Naive thymus-derived CD8-positive, alpha-beta T cell (primary cell): ENCODE measurements at regions of chr11 and their contacts with region 1.

Region 1: GRCh38 chr11:18634140-18635032 is at the start of gene SPTY2D1:
- DNase-seq: peak; percentile 92 to 99 (median 98)
- ATAC-seq: peak; percentile 89
- H3K4me3 Mint-ChIP-seq: peak within 1 kb of the TSS; percentile 87 to 96 (median 94)
- H3K27ac Mint-ChIP-seq: peak within 1 kb of the TSS; percentile 95 to 100 (median 99)
- H3K4me1 Mint-ChIP-seq: peaks cover 10 to 42% (median 38%) of the 10 kb centered on the region in 4 donors
- H3K27me3 Mint-ChIP-seq: peaks cover 0 to 1% (median 0%) of the 10 kb centered on the region in 5 donors
- polyA plus RNA-seq, gene SPTY2D1: 4.7 to 11.0 (median 7.3) TPM

Region 2: GRCh38 chr11:18321980-18322711 is 312.2 kb before region 1 on chr11 and contains the starts of genes GTF2H1 and HPS5:
- POLR2A ChIA-PET with region 1: interaction called, 13 read pairs
- DNase-seq: peak; percentile 84 to 100 (median 97)
- ATAC-seq: peak; percentile 87 to 90
- H3K4me3 Mint-ChIP-seq: peak within 1 kb of the TSS; percentile 93 to 100 (median 99)
- H3K27ac Mint-ChIP-seq: peak within 1 kb of the TSS; percentile 98 to 100 (median 100)
- H3K4me1 Mint-ChIP-seq: peaks cover 37 to 85% (median 79%) of the 10 kb centered on the region in 4 donors
- H3K27me3 Mint-ChIP-seq: no peaks in the 10 kb centered on the region
- polyA plus RNA-seq, gene GTF2H1: 29.0 to 34.3 (median 29.0) TPM
- polyA plus RNA-seq, gene HPS5: 11.6 to 12.2 (median 11.7) TPM

Region 3: GRCh38 chr11:18588297-18589252 is 45.8 kb before region 1 on chr11 and contains the start of gene UEVLD:
- POLR2A ChIA-PET with region 1: interaction called, 14 read pairs
- DNase-seq: peak in 9 of 10 donors; percentile 21 to 66 (median 38)
- ATAC-seq: peak; percentile 46 to 61
- H3K4me3 Mint-ChIP-seq: no peak within 1 kb of the TSS
- H3K27ac Mint-ChIP-seq: no peak within 1 kb of the TSS
- H3K4me1 Mint-ChIP-seq: peaks cover 0 to 12% (median 5%) of the 10 kb centered on the region in 4 donors
- H3K27me3 Mint-ChIP-seq: no peaks in the 10 kb centered on the region
- polyA plus RNA-seq, gene UEVLD: 5.5 to 8.9 (median 6.1) TPM

Region 4: DNA sequence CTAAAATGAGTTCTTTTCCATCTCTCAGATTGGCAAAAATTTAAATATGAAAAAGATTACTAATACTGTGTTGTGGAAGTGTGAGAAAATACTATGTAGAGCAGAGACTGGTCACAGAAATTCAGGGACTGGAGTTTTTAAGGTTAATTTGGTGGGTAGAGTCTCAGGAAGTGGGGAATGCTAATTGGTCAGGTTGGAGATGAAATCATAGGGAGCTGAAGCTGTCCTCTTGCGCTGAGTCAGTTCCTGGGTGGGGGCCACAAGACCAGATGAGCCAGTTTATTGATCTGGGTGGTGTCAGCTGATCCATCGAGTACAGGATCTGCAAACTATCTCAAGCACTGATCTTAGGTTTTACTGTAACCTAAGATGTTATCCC is 34.8 kb after region 1 on chr11:
- POLR2A ChIA-PET with region 1: interaction called, 12 read pairs
- DNase-seq: no peak
- ATAC-seq: no peak
- H3K4me3 Mint-ChIP-seq: peak overlapping the region in 7 of 10 donors; percentile 7 to 48 (median 23)
- H3K27ac Mint-ChIP-seq: peak overlapping the region; percentile 2 to 82 (median 64)
- H3K4me1 Mint-ChIP-seq: peaks cover 20 to 70% (median 51%) of the 10 kb centered on the region in 4 donors
- H3K27me3 Mint-ChIP-seq: no peaks in the 10 kb centered on the region

Region 5: DNA sequence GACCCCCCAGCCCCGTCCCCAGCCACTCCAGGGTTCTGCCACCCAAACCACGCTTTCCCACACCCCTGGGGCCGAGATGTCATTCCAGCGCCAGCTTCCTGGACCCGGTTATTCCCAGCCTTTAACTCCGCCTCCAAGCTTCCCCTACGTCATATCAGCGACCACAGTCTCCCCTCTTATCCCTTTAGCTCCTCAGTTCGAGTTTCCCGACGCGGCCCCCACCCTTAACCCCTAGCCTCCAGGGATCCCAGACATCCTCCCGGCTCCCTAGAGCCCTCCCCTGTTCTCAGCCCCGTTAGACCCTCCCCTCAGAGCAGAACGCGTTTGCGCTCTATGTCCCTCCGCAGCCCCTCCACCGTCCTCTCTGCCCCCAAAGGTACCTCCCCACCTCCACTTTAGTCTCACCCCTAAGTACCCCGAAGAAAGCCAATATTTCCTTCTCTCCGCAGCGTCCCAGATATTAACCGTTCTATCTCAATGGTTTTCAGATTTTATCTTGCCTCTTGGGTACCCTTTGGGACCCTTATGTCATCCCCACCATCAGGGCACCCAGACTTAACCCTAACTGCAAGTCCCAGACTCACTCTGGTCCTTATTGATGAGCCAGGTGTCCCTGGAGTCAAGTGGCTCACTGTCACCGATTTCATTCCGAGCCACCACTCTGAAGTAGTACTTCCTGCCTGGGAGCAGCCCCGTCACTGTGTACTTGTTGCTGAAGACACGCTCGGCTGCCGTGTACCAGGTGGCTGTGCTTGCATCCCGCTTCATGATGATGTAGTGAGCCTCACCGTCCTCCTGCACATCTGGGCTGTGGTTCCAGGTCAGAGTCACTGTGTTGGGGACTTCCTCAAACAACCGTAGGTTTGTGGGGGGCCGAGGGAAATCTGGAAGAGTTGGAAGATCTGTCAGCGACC is 72.2 kb after region 1 on chr11:
- POLR2A ChIA-PET with region 1: interaction called, 20 read pairs
- DNase-seq: peak in 9 of 10 donors; percentile 23 to 82 (median 60)
- ATAC-seq: peak; percentile 83 to 91
- H3K4me3 Mint-ChIP-seq: peak overlapping the region; percentile 86 to 100 (median 94)
- H3K27ac Mint-ChIP-seq: peak overlapping the region; percentile 82 to 98 (median 96)
- H3K4me1 Mint-ChIP-seq: peaks cover 16 to 27% (median 24%) of the 10 kb centered on the region in 4 donors
- H3K27me3 Mint-ChIP-seq: peaks cover 0 to 1% (median 0%) of the 10 kb centered on the region in 5 donors